Gastrocnemius medialis (tissue), 4 donors: ENCODE measurements at regions of chr2 and their contacts with region 1.

Region 1: DNA sequence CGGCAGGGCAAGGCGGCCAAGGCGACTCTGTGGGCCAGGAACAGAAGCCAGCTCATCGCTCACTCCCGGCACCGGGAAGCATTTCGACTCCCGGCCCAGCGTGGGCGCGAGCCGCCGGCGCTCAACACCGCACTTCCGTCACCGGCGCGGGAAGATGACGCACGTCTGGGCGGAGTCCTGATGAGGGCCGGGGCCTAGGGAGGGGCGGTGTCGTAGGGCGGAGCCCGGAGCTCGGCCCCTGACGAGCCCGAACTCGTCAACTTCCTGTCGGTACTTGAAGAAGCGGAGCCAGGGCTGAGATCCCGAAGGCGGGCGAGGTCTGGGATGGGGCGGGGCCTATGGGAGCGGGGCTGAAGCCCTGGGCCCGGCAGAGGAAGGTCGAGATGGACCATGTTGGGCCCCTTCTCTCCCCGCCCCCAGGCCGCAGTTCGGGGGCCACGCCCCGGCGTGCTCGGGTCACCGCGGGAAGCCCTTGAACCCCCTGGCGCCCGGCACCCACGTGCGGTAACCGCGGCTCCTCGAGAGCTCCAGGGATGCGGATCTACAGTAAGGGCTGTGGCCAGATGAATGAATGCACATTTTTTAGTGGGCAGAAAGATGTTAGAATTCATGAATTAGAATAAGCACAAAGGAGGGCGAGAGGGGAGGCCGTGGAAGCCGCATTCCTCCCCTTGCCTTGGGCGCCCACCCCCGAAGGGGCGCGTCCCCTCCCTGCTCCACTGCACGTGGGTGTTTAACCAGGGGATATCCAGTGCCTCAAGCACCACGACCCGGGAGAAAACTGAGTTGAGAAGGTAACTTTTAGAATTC is at the start of gene RNASEH1:
- DNase-seq: peak; percentile 95 to 97
- ATAC-seq: peak; percentile 99 to 100
- H3K4me3 ChIP-seq: peak within 1 kb of the TSS; percentile 87 to 99 (median 98)
- H3K27ac ChIP-seq: peak within 1 kb of the TSS; percentile 92 to 99 (median 95)
- H3K4me1 ChIP-seq: peaks cover 18% of the 10 kb centered on the region in 2 donors
- H3K27me3 ChIP-seq: no peaks in the 10 kb centered on the region
- CTCF ChIP-seq: no peak
- POLR2A ChIP-seq: peak; percentile 85 to 90
- total RNA-seq, gene RNASEH1: 20.6 to 27.4 (median 23.6) TPM

Region 2: DNA sequence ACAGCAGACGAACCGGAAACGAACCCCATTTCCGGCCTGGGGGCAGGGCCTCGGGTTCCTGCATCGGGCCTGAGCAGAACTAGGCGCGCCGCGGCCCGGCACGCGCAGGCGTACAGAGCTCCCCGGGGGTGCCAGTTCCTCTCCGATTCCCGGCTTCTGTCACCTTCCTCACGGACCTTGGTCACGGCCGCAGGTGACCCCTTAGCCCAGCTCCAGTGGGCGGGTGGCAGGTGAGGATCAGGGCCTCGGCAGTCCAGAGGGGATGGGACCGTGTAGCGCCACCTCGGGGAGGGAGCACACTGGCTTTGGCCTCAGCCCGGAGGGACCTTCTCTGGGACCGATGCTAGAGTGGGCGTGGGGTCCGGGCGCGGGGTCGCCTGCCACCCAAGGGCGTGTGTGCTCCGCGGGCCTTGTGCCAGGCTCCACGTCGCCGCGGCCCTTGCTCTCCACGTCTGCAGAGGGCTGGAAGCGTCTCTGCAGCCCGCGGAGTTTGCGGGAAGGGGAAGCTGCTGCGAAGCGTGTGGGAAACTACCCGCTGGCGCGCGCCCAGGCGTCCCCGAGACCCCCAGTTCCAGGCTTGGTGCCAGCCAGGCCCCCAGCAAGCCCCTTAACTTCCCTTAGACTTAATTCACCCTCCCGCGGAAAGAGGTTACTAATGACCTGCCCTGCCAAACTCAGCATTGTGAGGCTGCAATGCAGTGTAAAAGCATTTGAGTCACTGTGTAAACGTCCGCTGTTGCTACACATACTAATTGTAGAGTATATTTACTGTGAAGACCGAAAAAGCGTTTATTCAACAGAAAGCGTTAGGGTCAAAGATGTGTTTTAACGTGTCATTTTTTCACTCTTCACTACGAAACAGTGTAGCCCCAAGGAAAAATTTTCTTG is 178.5 kb before region 1 on chr2 and contains the start of gene TRAPPC12:
- in situ Hi-C with region 1: loop called in 2 of 4 experiments (anchors 25 kb)
- intact Hi-C with region 1: loop called (anchors 1 kb)
- DNase-seq: peak; percentile 81 to 89
- ATAC-seq: peak; percentile 81 to 83
- H3K4me3 ChIP-seq: peak within 1 kb of the TSS; percentile 83 to 99 (median 91)
- H3K27ac ChIP-seq: peak within 1 kb of the TSS; percentile 90 to 93 (median 93)
- H3K4me1 ChIP-seq: peaks cover 29 to 36% of the 10 kb centered on the region in 2 donors
- H3K27me3 ChIP-seq: no peaks in the 10 kb centered on the region
- CTCF ChIP-seq: peak in 3 of 5 experiments; percentile 19 to 57 (median 55)
- POLR2A ChIP-seq: peak; percentile 72 to 79
- total RNA-seq, gene TRAPPC12: 36.6 to 57.4 (median 53.1) TPM

Region 3: DNA sequence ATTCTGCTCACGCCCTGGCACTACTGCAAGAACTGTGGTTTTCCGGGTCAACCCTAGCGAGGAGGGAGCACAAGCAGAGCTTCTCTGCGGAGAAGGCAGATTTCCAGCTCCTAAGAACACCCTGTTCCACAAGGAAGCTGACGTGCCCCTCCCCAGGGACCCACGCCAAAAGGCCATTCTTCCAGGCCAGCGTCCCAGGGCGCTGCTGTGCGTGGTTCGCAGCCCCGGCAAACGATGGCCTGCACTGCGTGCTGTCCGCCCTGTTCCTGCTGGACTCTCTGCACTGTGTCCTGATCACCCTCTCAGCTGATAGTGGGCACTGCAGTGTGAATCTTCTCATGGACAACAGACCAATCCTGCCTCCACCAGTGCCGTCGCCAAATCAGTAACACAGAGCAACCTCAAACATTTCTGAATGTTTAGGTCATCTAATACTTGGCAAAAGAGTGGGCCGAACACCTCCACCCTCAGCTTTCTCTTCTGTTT is 88.2 kb before region 1 on chr2:
- in situ Hi-C with region 1: no loop called
- intact Hi-C with region 1: loop called (anchors 2 kb)
- DNase-seq: peak; percentile 93 to 94
- ATAC-seq: peak; percentile 73 to 76
- H3K4me3 ChIP-seq: peak overlapping the region in 3 of 4 donors; percentile 10 to 37 (median 26)
- H3K27ac ChIP-seq: peak overlapping the region; percentile 87 to 99 (median 92)
- H3K4me1 ChIP-seq: peaks cover 36 to 63% of the 10 kb centered on the region in 2 donors
- H3K27me3 ChIP-seq: no peaks in the 10 kb centered on the region
- CTCF ChIP-seq: no peak
- POLR2A ChIP-seq: peak; percentile 17 to 46

Region 4: DNA sequence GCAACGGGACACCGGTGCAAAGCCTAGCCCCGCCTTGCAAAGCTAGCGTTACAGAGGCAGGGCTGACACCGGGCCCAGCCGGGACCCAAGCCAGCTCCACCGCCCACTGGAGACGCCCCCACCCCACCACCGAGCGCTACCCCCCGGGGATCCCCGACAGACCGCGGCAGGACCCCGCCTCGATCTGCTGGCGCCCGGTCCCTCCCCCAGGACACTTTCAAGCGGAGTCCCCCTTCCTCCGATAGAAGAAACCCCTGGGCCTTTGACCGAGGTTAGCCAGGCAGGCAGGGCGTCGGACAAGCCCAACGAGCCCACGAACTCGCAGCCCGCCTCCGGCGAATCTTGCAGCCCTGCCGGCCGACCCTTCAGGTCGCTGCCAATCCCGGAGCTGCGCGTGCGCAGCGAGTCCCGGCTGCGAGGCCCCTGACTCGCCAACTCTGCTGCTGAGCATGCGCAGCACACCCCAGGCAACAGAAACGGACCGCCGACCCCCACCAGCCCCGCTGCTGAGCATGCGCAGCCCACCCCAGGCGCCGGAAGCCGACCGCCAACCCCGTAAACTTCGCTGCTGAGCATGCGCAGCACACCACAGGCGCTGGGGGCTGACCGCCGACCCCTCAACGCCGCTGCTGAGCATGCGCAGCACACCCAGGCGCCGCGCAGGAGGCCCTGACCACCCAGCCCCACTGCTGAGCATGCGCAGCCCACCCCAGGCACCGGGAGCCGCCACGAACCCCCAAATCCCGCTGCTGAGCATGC is 39.7 kb before region 1 on chr2:
- in situ Hi-C with region 1: no loop called
- intact Hi-C with region 1: loop called (anchors 1 kb)
- DNase-seq: peak; percentile 98
- ATAC-seq: peak; percentile 85 to 89
- H3K4me3 ChIP-seq: peak overlapping the region; percentile 79 to 98 (median 90)
- H3K27ac ChIP-seq: peak overlapping the region; percentile 96 to 99 (median 97)
- H3K4me1 ChIP-seq: peaks cover 26 to 30% of the 10 kb centered on the region in 2 donors
- H3K27me3 ChIP-seq: no peaks in the 10 kb centered on the region
- CTCF ChIP-seq: no peak
- POLR2A ChIP-seq: peak; percentile 81 to 83

Region 5: DNA sequence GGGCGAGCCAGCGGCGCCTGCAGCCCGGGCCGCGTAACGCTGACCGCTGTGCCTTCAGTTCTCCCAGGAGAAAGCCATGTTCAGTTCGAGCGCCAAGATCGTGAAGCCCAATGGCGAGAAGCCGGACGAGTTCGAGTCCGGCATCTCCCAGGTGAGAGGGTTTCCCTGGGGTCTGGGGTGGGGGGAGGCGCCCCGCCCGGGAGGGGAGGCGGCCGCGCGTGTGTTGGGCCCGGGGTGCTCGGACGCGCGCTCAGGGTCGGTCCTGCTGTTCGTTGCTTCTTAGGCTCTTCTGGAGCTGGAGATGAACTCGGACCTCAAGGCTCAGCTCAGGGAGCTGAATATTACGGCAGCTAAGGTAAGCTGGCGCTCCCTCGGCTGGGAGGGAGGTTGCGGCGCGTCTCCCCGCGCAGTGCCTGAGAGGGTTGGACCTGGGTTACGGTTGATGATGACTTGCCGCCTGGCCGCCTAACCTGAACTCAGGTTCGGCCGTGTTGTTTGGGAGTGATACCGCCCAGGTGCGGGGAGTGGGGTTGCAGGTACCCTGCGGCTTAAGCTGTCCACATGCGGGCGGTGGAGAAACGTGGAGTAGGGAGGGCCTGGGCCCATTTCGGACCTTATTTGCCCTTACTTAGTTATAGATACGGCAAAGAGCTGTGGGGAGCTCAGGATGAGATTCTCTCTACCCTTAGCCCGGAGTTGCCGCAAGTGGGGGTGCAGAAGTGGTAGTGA is 17.3 kb after region 1 on chr2:
- in situ Hi-C with region 1: no loop called
- intact Hi-C with region 1: loop called (anchors 1 kb)
- DNase-seq: no peak
- ATAC-seq: peak in 1 of 2 donors; percentile 14
- H3K4me3 ChIP-seq: peak overlapping the region; percentile 78 to 96 (median 84)
- H3K27ac ChIP-seq: peak overlapping the region; percentile 85 to 96 (median 92)
- H3K4me1 ChIP-seq: peaks cover 21 to 30% of the 10 kb centered on the region in 2 donors
- H3K27me3 ChIP-seq: no peaks in the 10 kb centered on the region
- CTCF ChIP-seq: no peak
- POLR2A ChIP-seq: no peak